ENCODE measurements at regions of chr10 and their contacts with region 1.

Region 1: GRCh38 chr10:129896136-129896859 is 67.8 kb downstream of the EBF3 start:
- DNase-seq: no peak
- ATAC-seq: no peak
- H3K4me3 ChIP-seq: no peak overlapping the region
- H3K27ac ChIP-seq: no peak overlapping the region
- H3K4me1 ChIP-seq: peaks cover 13 to 64% (median 34%) of the 10 kb centered on the region in 9 donors
- H3K27me3 ChIP-seq: no peaks in the 10 kb centered on the region
- CTCF ChIP-seq: no peak

Region 2: GRCh38 chr10:129936266-129936922 is 40.1 kb after region 1 on chr10:
- intact Hi-C with region 1: loop called in 5 of 10 experiments (anchors 5 to 10 kb)
- DNase-seq: no peak
- ATAC-seq: no peak
- H3K4me3 ChIP-seq: no peak overlapping the region
- H3K27ac ChIP-seq: no peak overlapping the region
- H3K4me1 ChIP-seq: peaks cover 6 to 82% (median 36%) of the 10 kb centered on the region in 9 donors
- H3K27me3 ChIP-seq: no peaks in the 10 kb centered on the region
- CTCF ChIP-seq: no peak

Region 3: DNA sequence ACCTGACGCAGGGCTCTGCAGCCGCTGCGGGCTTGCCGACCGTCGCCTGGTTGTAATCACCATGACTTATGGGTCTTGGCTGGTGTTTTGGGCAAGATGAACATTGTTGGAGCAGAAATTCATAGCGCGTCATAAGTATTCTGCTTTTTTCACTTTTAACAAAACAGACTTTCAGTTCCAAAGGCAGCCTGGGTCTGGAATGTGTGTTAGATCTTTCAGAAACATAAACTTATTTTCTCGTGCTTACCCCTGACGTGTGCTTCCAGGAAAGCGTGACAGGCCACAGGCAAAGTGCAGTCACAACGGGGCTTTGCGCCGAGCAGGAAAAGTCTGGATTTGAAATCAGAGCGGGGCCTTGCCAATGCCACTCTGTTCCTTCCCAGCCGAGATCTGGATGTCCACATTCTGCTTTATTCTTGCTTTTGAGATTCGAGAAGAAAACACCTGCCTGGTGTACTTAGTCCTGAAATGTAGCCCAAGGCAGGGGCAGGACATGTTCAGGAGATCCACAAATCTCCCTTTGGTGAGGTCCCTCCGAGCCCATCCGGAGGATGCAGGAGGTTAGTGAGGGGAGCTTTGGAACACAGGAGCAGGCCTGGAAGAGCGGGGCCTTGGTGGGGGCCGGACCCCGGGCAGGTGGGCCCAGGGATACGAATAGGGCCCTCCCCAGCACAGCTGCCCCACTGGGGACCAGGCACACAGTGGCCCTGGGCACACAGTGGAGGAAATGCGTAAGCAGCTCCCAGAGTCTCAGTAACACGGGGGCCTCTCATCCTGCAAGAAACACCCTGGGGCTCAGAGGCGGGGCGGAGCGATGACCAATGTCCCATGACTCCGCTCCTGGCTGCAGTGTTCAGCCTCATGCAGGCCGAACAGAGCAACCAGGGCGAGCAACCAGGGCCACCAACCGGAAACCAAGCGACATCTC is 117.3 kb after region 1 on chr10:
- intact Hi-C with region 1: no loop called
- DNase-seq: no peak
- ATAC-seq: no peak
- H3K4me3 ChIP-seq: no peak overlapping the region
- H3K27ac ChIP-seq: no peak overlapping the region
- H3K4me1 ChIP-seq: no peaks in the 10 kb centered on the region
- H3K27me3 ChIP-seq: peaks cover 0 to 41% (median 11%) of the 10 kb centered on the region in 7 donors
- CTCF ChIP-seq: no peak